ENCODE measurements at regions of chr2 and their contacts with region 1.

Region 1: GRCh38 chr2:130355578-130356431 is at the start of gene PTPN18:
- DNase-seq: peak; percentile 98
- ATAC-seq: peak; percentile 98
- total RNA-seq, gene PTPN18: 16.9 TPM

Region 2: DNA sequence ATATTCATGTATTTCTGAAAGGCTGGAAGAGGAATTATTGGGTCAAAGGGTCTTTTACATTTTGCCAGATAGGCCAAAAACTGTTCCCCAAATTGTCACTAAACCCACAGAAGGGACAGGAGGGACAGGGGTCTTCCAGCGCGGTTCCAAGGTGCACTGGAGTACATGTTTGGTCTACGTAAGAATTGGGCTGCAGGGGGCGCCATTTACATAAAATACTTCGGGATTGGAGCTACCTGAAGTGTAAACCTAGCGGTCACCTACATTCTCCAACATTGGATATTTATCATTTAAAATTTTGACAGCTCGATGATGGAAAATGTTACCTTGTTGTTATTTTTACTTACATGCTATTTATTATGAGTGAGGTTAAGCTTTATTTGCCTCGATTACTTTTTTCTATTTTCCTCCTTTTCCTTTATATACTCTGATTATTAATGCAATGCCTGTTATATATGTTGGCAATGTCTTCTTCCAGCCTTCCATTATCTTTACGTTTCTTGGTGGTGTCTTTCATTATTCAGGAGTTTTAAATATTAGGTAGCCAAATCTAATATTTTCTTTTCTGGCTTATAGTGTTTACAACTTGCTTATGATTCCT is 419.4 kb before region 1 on chr2:
- intact Hi-C with region 1: no loop called
- DNase-seq: no peak
- ATAC-seq: no peak

Region 3: DNA sequence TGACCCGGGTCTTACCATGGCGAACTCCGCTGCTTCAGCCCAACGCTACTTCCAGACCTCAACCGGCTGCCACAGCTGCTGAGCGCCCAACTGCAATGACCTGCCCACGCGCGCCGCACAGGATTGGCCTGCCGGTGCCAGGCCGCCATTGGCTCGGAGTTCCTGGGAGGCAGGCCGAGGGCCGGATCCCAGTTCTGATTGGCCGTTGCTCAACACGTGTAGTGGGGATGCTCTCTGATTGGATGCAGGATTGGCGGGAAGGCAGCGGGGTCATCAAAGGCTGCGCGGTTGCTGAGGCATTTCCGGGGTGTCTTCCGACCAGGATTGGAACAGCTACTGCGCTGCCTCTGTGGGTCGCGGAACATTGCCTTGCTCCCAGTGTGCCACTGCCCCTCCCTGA is 157.5 kb before region 1 on chr2 and contains the start of gene TUBA3E:
- intact Hi-C with region 1: no loop called
- DNase-seq: no peak
- ATAC-seq: no peak
- total RNA-seq, gene TUBA3E: 80.0 TPM

Region 4: GRCh38 chr2:130372055-130372832 is 16.4 kb after region 1 on chr2:
- intact Hi-C with region 1: loop called (anchors 1 kb)
- DNase-seq: peak; percentile 96
- ATAC-seq: peak; percentile 96

Region 5: DNA sequence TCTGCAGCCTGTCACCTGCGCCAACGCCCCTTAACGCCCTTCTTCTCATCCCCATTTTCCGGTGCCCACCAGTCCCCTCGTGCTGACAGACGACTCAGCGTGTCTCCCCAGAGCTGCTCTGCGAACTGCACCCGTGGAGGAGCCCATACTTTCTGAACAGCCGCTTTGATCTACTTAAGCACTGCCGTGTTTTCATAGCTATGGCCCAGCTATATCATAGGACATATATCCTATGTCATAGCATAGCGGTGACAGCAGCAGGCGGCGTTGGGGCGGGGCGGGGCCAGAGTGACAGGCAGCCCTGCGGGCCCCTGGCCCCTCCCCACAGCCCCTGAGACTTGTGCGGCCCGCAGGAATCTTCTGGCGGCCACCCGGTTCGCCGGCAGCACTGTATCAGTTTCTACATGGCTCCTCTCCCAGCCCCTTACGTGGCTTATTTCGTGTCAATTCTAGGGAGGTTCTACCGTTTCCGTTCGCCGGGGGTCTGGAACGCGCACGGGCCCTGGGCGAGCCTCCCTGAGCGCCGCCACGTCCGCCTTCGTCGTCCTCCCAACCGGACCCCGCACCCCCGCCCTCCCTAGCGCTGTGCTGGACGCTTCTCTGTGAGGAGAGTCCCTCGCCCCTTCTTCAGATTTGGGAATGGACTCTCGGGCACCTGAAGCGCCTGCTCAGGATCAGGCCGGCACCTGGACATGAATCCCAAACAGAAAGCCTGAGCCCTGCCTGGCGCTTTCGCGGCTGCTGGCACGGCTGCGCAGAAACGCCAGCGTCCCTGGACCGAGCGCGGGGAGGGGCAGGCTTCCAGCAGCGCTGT is 35.5 kb after region 1 on chr2:
- intact Hi-C with region 1: loop called (anchors 5 kb)
- DNase-seq: peak; percentile 95
- ATAC-seq: peak; percentile 90

Region 6: DNA sequence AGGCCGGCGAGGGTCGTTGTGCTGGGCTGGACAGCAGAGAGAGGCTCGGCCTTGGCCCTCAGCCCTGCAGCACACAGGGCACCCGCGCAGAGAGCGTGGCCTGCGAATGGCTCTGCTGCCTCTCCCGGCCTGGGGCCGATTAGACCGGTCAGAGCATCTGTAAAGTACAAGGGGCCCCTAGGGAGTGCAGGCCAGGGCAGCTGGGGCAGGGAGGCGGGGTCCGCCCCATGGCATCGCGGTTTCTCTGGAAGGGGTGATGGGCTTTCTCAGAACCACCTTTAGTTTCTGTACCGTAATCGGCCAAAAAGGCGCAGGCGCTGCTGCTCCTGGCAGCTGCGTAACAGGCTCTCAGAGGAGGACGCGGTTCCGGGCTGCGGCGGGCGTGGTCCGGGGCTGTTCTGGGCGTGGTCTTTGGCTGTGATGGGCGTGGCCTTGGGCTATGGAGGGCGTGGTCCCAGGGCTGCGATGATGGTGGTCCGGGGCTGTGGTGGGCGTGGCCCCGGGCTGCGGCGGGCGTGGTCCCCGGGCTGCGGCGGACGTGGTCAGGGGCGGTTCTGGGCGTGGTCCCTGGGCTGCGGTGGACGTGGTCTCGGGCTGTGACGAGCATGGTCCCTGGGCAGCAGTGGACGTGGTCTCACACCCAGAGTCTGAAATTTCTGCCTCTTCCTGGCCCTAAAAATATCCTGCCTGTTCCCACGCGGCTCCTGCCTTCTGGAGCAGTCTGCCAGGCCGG is 371.6 kb after region 1 on chr2:
- intact Hi-C with region 1: loop called (anchors 10 kb)
- DNase-seq: peak; percentile 88
- ATAC-seq: peak; percentile 93

Region 7: GRCh38 chr2:131085646-131086045 is 729.8 kb after region 1 on chr2:
- intact Hi-C with region 1: no loop called
- DNase-seq: no peak
- ATAC-seq: no peak

Measured in Right ventricle myocardium inferior (tissue), 1 donor.